Activated T-helper 1 cell treated with anti-CD3 and anti-CD28 coated beads, Interleukin-12 subunit alpha, Interleukin-12 subunit beta, Interleukin-2, Interleukin-4 antibody, amounts not matched to agents 30 ng/mL and 10 ng/mL and 1 ng/mL, durations not matched to agents 14 hours and 24 hours and 36 hours (primary cell): ENCODE measurements at regions of chr14 and their contacts with region 1.

Region 1: DNA sequence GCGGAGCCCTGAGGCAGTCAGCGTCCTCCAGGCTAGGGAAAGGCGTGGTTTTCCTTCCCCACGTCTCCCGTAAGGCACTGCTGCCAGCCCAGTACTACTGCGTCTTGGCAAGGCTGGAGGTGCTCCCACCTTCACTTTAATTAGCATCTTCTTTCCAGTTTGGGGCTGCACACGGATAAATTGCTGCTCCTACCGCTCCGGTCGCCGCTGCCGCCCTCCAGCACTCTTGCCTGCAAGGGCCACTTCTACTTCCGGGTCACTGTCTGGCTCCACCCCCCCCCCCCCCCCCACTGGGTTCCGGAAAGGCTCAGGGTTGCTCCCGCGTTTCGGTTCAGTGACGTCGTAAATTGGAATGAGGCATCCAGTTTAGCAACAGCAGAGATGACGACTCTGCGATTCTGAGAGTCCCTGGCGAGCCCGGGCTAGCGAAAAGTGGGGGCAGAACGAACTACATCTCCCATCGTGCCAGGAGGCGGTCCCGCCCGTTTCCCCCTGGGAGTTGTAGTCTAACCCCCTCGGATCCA is at the start of gene NEDD8:
- DNase-seq: peak; percentile 84
- H3K4me3 Mint-ChIP-seq: peak within 1 kb of the TSS; percentile 93
- H3K27ac Mint-ChIP-seq: peak within 1 kb of the TSS; percentile 91
- H3K4me1 Mint-ChIP-seq: peaks cover 50% of the 10 kb centered on the region
- H3K27me3 Mint-ChIP-seq: no peaks in the 10 kb centered on the region
- total RNA-seq, gene NEDD8: 177 and 185 TPM in 2 replicates

Region 2: GRCh38 chr14:24188251-24189058 is 43.7 kb before region 1 on chr14 and contains the start of gene IPO4:
- intact Hi-C with region 1: loop called (anchors 1 kb)
- DNase-seq: peak; percentile 93
- H3K4me3 Mint-ChIP-seq: peak within 1 kb of the TSS; percentile 91
- H3K27ac Mint-ChIP-seq: peak within 1 kb of the TSS; percentile 86
- H3K4me1 Mint-ChIP-seq: peaks cover 42% of the 10 kb centered on the region
- H3K27me3 Mint-ChIP-seq: no peaks in the 10 kb centered on the region
- total RNA-seq, gene IPO4: 106 and 107 TPM in 2 replicates

Region 3: GRCh38 chr14:24195191-24196070 is 36.8 kb before region 1 on chr14 and contains the start of gene TM9SF1:
- intact Hi-C with region 1: loop called (anchors 1 kb)
- DNase-seq: peak; percentile 85
- H3K4me3 Mint-ChIP-seq: peak within 1 kb of the TSS; percentile 97
- H3K27ac Mint-ChIP-seq: peak within 1 kb of the TSS; percentile 96
- H3K4me1 Mint-ChIP-seq: peaks cover 61% of the 10 kb centered on the region
- H3K27me3 Mint-ChIP-seq: no peaks in the 10 kb centered on the region
- total RNA-seq, gene TM9SF1: 34.5 and 35.3 TPM in 2 replicates

Region 4: GRCh38 chr14:24838945-24839616 is 606.9 kb after region 1 on chr14:
- intact Hi-C with region 1: no loop called
- DNase-seq: no peak
- H3K4me3 Mint-ChIP-seq: no peak overlapping the region
- H3K27ac Mint-ChIP-seq: no peak overlapping the region
- H3K4me1 Mint-ChIP-seq: no peaks in the 10 kb centered on the region
- H3K27me3 Mint-ChIP-seq: peaks cover 4% of the 10 kb centered on the region